Calu3 (cell line): ENCODE measurements at regions of chr15 and their contacts with region 1.

Region 1: DNA sequence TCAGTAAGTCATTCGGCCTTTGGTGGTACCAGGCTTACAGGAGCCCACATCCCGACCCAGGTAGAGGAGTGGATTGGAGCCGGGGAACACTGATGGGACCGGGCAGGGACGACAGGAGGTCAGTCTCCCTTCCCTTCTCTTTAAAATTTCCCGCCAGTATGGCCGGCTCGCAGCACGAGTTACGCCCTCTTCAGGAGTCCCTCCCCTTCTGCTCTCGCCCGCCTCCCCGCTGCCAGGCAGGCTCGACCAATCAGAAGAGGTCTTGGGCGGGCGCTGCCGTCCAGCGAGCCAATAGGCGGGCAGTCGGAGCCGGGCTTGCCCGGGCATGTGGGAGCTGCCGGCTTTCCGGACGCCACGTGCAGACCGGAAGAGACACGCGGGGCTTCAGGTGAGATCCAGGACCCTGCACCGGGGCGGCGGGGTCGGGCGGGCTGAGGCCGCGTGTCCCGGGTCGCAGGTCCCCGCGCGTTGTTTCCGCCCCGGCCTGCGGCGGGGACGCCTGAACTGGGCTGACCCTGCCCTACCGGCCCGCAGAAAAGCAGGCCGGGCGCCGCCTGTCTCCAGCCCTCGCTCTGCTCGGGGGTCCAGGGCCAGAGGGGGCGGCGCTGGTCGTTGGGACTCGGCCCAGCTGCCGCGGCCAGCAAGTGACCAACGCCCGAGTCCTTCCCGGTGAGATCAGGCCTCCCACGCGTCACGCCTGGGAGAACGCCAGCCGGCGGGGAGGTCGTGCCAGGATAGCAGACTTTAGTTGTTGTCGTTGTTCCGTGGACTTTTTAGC is at the start of gene AEN:
- DNase-seq: peak; percentile 98
- H3K4me3 Mint-ChIP-seq: peak within 1 kb of the TSS; percentile 85
- H3K27ac Mint-ChIP-seq: peak within 1 kb of the TSS; percentile 91
- H3K4me1 Mint-ChIP-seq: peaks cover 28% of the 10 kb centered on the region
- H3K27me3 Mint-ChIP-seq: no peaks in the 10 kb centered on the region
- CTCF ChIP-seq: no peak
- total RNA-seq, gene AEN: 34.9 and 43.4 TPM in 2 replicates

Region 2: GRCh38 chr15:88571153-88571851 is 49.9 kb before region 1 on chr15:
- CTCF ChIA-PET with region 1: no interaction called
- intact Hi-C with region 1: no loop called
- DNase-seq: no peak
- H3K4me3 Mint-ChIP-seq: no peak overlapping the region
- H3K27ac Mint-ChIP-seq: no peak overlapping the region
- H3K4me1 Mint-ChIP-seq: no peaks in the 10 kb centered on the region
- H3K27me3 Mint-ChIP-seq: peaks cover 91% of the 10 kb centered on the region
- CTCF ChIP-seq: no peak

Region 3: DNA sequence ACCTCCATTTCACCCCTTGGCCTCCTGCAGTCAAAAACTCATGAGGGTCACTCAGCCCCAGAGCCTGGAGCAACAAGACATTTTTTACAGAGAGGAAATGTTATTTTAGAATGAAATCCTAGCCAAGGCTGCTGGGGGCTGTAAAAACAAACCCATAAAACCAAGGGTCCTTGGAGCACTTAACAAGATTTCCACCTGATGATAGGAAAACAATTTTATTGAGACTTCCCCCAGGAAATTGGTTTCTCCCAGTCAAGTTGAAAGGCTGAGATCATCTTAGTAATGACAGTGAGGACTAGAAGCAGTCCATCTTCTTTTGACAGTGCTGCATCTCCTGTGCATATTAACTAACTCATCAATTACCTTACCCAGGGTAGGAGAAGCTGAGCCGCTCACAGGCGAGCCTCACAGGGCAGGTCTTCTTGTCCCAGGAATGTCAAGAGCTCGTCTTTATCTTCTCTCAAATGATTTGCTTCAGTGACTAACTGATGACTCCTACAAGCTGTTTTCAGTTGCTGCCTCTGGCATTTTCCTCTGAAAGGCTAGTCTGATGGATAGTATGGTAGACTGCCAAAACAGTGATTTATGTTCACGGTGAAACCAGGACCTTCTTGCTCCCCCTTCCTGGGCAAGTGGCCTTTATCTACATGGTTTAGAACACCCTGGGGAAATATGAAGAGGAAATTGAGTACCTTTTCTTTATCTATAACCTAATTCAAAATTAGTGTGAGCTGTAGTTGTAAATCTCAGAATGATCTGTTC is 34.6 kb before region 1 on chr15:
- CTCF ChIA-PET with region 1: no interaction called
- intact Hi-C with region 1: no loop called
- DNase-seq: no peak
- H3K4me3 Mint-ChIP-seq: no peak overlapping the region
- H3K27ac Mint-ChIP-seq: no peak overlapping the region
- H3K4me1 Mint-ChIP-seq: no peaks in the 10 kb centered on the region
- H3K27me3 Mint-ChIP-seq: peaks cover 65% of the 10 kb centered on the region
- CTCF ChIP-seq: no peak

Region 4: GRCh38 chr15:88638626-88639372 is 17.6 kb after region 1 on chr15 and contains the start of gene ISG20:
- CTCF ChIA-PET with region 1: interaction called, 13 read pairs
- intact Hi-C with region 1: no loop called
- DNase-seq: peak; percentile 98
- H3K4me3 Mint-ChIP-seq: peak within 1 kb of the TSS; percentile 76
- H3K27ac Mint-ChIP-seq: peak within 1 kb of the TSS; percentile 93
- H3K4me1 Mint-ChIP-seq: peaks cover 49% of the 10 kb centered on the region
- H3K27me3 Mint-ChIP-seq: no peaks in the 10 kb centered on the region
- CTCF ChIP-seq: no peak
- total RNA-seq, gene ISG20: 75.6 and 155 TPM in 2 replicates